ENCODE measurements at regions of chr12 and their contacts with region 1.

Region 1: DNA sequence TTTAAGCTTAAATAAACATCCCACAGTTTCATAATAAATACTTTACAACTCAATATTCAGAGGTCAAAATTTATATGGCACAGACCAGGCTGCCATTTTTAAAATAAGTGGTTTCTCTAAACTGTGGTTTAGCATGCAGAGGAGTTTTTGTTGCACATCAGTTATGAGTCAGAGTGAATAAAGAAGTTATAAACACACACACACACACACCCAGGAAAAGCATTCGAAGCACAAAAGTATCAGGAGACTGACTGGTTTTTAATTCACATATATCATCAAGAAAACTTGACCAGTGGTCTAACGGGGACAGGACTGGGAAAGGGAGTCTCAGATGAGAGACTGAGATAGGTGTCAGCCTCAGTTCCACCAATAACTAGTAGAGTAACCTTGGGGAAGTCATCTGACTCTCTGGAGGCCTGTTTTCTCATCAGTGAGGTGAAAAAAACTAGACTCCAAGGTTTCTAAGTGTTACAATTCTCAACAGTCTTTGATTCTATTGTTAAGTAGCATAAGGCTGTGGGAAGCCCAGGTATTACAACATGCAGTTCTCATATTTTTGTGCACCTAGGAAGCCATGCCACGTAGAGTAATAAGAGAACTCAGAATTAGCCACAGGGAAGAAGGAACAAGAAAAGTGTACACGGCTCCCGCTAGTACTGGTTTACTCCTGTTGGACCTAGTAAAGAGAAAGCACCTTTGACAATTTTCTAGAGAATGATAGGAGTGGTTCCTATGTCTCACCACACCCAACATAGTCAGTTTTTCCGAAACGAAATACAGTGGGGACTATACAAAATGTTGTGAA is 5.2 kb downstream of the PPTC7 start:
- DNase-seq: peak in 2 of 9 donors; percentile 22 to 79
- ATAC-seq: peak; percentile 43
- H3K4me3 ChIP-seq: peak overlapping the region; percentile 14
- H3K4me3 Mint-ChIP-seq: peak overlapping the region; percentile 56 to 96 (median 94)
- H3K27ac ChIP-seq: peak overlapping the region; percentile 74
- H3K27ac Mint-ChIP-seq: peak overlapping the region; percentile 67 to 96 (median 85)
- H3K4me1 ChIP-seq: peaks cover 23 to 48% of the 10 kb centered on the region in 2 donors
- H3K4me1 Mint-ChIP-seq: peaks cover 56 to 85% (median 77%) of the 10 kb centered on the region in 7 donors
- H3K27me3 ChIP-seq: no peaks in the 10 kb centered on the region
- H3K27me3 Mint-ChIP-seq: no peaks in the 10 kb centered on the region

Region 2: DNA sequence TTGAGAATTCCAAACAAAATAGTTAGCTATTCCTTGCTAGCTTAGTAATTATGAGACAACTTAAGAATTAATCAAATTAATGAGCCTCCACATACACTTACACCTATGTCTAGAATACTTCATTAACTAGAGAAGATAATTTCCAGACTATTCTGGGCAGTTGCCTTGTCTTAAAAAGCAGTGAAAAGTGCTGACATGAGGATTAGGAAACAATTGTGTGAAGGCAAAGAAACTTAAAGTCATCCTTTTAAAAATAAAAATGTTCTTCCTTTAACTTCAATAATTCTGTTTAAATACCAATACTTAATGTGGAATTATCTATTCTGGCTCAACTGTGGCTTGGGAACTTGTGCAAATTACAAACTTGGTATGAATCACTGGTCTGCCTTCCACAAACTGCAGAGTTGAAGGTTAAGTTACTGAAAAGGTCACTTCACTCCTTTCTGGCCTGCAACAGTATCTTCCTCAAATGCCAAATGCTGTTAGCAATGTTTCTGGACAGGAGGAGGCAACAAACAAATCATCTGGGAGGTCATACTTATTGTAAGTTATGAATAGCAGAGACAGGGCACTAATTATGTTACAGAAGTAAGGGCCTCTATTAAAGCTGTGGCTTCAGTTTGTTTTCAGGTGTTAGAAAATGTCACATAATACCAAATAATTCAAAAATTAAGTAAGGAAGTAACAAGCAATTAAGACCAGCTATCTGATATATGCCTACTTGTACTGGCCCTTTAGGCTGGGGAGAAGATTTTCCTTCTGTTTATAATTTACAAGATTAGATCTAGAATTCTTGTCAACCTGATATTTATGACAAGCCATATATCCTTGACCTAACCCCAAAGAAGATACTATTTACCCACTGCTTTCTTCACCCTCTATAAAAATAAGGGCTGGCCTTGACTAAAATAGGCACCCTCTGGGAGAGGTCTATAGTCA is 13.9 kb before region 1 on chr12:
- CTCF ChIA-PET with region 1: interaction called, 6 read pairs
- POLR2A ChIA-PET with region 1: interaction called, 9 read pairs
- intact Hi-C with region 1: loop called (anchors 1 kb)
- DNase-seq: no peak
- ATAC-seq: peak; percentile 33
- H3K4me3 ChIP-seq: no peak overlapping the region
- H3K4me3 Mint-ChIP-seq: peak overlapping the region in 7 of 10 donors; percentile 1 to 86 (median 23)
- H3K27ac ChIP-seq: peak overlapping the region; percentile 71
- H3K27ac Mint-ChIP-seq: peak overlapping the region; percentile 77 to 98 (median 94)
- H3K4me1 ChIP-seq: peaks cover 8 to 53% of the 10 kb centered on the region in 2 donors
- H3K4me1 Mint-ChIP-seq: peaks cover 55 to 93% (median 66%) of the 10 kb centered on the region in 7 donors
- H3K27me3 ChIP-seq: no peaks in the 10 kb centered on the region
- H3K27me3 Mint-ChIP-seq: no peaks in the 10 kb centered on the region

Region 3: DNA sequence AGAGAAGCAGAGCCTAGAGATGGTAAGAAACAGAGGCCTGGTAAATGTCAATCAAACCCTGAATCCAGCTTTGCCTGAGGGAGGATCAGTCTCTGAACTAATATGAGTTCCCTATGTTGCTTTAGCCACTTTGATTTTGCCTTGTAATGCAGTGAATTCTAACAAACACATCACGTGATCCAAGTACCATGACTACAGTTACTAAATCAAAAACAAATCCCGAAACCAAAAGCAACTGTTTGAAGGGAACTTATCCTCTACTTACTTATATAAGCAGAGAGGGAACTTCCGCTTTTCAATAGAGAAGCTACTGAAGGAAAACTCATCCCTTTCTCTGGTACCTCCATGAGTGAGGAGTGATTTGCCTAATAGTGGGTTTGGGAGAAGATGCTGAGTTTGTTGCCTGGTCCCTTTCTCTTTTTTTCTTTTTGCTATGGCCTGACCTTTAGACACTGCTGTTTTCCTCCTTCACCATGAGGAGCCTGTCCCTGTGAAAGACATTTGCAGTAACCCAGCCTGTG is 12.9 kb after region 1 on chr12:
- CTCF ChIA-PET with region 1: interaction called, 3 read pairs
- POLR2A ChIA-PET with region 1: interaction called, 32 read pairs
- intact Hi-C with region 1: loop called (anchors 1 kb)
- DNase-seq: peak in 7 of 9 donors; percentile 53 to 81 (median 74)
- ATAC-seq: peak; percentile 94
- H3K4me3 ChIP-seq: peak overlapping the region; percentile 8
- H3K4me3 Mint-ChIP-seq: peak overlapping the region; percentile 2 to 73 (median 62)
- H3K27ac ChIP-seq: peak overlapping the region; percentile 76
- H3K27ac Mint-ChIP-seq: peak overlapping the region; percentile 91 to 98 (median 95)
- H3K4me1 ChIP-seq: peaks cover 2 to 29% of the 10 kb centered on the region in 2 donors
- H3K4me1 Mint-ChIP-seq: peaks cover 14 to 37% (median 34%) of the 10 kb centered on the region in 7 donors
- H3K27me3 ChIP-seq: no peaks in the 10 kb centered on the region
- H3K27me3 Mint-ChIP-seq: no peaks in the 10 kb centered on the region

Region 4: GRCh38 chr12:110780448-110780847 is 202.5 kb after region 1 on chr12:
- CTCF ChIA-PET with region 1: no interaction called
- POLR2A ChIA-PET with region 1: no interaction called
- intact Hi-C with region 1: no loop called
- DNase-seq: peak in 8 of 9 donors; percentile 45 to 78 (median 62)
- ATAC-seq: peak; percentile 93
- H3K4me3 ChIP-seq: no peak overlapping the region
- H3K4me3 Mint-ChIP-seq: peak overlapping the region; percentile 54 to 85 (median 65)
- H3K27ac ChIP-seq: peak overlapping the region; percentile 57
- H3K27ac Mint-ChIP-seq: peak overlapping the region; percentile 85 to 96 (median 90)
- H3K4me1 ChIP-seq: peaks cover 9 to 37% of the 10 kb centered on the region in 2 donors
- H3K4me1 Mint-ChIP-seq: peaks cover 30 to 59% (median 47%) of the 10 kb centered on the region in 7 donors
- H3K27me3 ChIP-seq: no peaks in the 10 kb centered on the region
- H3K27me3 Mint-ChIP-seq: no peaks in the 10 kb centered on the region